Spleen (tissue), 13 donors: ENCODE measurements at regions of chr1 and their contacts with region 1.

Region 1: GRCh38 chr1:65049941-65050713 is 83.8 kb upstream of the JAK1 start:
- DNase-seq: no peak
- H3K4me3 ChIP-seq: no peak overlapping the region
- H3K27ac ChIP-seq: no peak overlapping the region
- H3K4me1 ChIP-seq: peaks cover 0 to 25% (median 3%) of the 10 kb centered on the region in 6 donors
- H3K27me3 ChIP-seq: no peaks in the 10 kb centered on the region
- CTCF ChIP-seq: no peak
- POLR2A ChIP-seq: no peak

Region 2: GRCh38 chr1:64766385-64766784 is 283.7 kb before region 1 on chr1:
- intact Hi-C with region 1: no loop called
- DNase-seq: no peak
- H3K4me3 ChIP-seq: no peak overlapping the region
- H3K27ac ChIP-seq: no peak overlapping the region
- H3K4me1 ChIP-seq: peaks cover 0 to 10% (median 0%) of the 10 kb centered on the region in 6 donors
- H3K27me3 ChIP-seq: no peaks in the 10 kb centered on the region
- CTCF ChIP-seq: no peak
- POLR2A ChIP-seq: no peak

Region 3: DNA sequence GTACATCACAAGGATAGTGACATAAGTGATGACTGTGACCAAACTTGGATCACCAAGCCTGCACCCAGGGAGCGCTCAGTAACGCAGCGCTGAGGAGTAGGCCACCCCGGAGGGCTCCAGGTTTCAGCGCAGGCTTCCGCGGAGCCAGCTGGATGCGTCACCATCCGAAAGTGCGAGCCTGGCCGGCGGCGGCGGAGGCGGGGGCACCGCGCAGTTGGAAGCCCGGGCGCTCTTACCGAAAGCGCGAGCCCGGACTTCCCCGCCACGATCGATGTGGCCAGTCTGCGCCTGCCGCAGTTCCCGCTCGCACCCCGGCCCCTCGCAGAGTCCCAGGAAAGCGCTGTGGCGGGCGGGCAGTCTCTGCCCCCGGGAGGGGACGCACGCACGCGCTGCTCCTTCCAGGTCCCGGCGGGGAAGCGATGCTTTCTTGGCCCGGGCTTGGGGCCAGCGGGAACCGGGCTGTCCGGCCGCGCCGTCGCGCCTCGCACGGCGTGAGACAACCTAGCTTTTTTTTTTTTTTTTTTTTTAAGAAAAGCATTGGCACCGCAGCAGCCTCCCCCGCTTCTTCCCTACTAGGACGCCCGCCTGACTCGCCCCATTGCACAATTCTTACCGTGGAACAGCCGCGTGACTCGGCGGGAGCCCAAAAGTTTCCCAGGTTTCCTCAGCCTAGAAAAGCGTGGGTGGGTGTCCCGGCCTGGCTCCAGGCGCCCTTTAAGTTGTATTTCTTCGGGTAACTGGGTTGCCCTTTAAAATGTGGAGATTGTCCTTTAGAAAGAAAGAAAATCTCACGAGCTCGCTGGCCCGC is 47.4 kb before region 1 on chr1:
- intact Hi-C with region 1: loop called (anchors 5 kb)
- DNase-seq: peak; percentile 91
- H3K4me3 ChIP-seq: peak overlapping the region; percentile 43 to 80 (median 56)
- H3K27ac ChIP-seq: peak overlapping the region; percentile 13 to 90 (median 86)
- H3K4me1 ChIP-seq: peaks cover 16 to 39% (median 29%) of the 10 kb centered on the region in 6 donors
- H3K27me3 ChIP-seq: peaks cover 0 to 15% (median 0%) of the 10 kb centered on the region in 7 donors
- CTCF ChIP-seq: no peak
- POLR2A ChIP-seq: no peak

Region 4: DNA sequence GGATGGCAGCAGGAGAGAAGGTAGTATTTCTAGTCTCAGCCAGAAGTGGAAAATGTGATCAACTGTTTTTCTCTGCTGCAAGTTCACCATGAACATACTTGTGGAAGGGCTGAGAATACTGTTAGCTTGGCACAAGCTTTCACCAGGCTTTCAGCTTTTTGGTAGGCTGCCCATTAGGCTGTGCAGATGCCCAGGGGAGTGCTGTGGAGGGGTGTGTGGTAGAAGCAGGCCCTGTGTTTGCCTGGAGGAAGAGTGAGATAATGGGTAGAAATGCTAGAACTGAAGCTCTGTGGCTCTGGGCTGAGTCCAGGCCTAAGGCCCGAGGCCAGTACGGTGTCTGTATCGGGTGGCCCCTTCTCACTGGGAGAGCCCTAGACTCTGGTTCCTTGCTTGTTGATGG is 269.0 kb after region 1 on chr1:
- intact Hi-C with region 1: no loop called
- DNase-seq: no peak
- H3K4me3 ChIP-seq: no peak overlapping the region
- H3K27ac ChIP-seq: no peak overlapping the region
- H3K4me1 ChIP-seq: no peaks in the 10 kb centered on the region
- H3K27me3 ChIP-seq: no peaks in the 10 kb centered on the region
- CTCF ChIP-seq: no peak
- POLR2A ChIP-seq: no peak

Region 5: DNA sequence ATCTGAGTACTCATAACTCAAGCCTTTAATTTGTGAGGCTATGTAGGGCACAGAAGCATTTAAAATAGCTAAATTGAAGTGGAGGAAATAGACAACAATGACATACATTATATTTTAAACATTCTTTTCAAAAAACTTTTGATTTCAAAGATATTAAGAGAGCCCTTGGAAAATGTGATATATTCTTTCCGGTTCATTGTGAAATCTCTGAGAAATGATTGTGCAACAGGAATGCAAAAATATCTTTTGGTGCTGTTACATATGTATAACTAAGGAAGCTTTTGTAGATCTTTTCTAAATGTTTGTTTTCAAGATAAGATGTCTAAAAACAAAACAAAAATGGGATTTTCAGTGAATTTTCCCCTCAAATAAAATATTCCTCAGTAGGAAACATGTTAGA is 555.5 kb after region 1 on chr1:
- intact Hi-C with region 1: no loop called
- DNase-seq: no peak
- H3K4me3 ChIP-seq: no peak overlapping the region
- H3K27ac ChIP-seq: no peak overlapping the region
- H3K4me1 ChIP-seq: no peaks in the 10 kb centered on the region
- H3K27me3 ChIP-seq: no peaks in the 10 kb centered on the region
- CTCF ChIP-seq: no peak
- POLR2A ChIP-seq: no peak